ENCODE measurements at regions of chr1 and their contacts with region 1.

Region 1: GRCh38 chr1:67853704-67854103 is 20.4 kb upstream of the GNG12 start:
- DNase-seq: no peak
- H3K4me3 ChIP-seq: no peak overlapping the region
- H3K27ac ChIP-seq: no peak overlapping the region
- H3K27me3 ChIP-seq: no peaks in the 10 kb centered on the region
- CTCF ChIP-seq: peak; percentile 99

Region 2: DNA sequence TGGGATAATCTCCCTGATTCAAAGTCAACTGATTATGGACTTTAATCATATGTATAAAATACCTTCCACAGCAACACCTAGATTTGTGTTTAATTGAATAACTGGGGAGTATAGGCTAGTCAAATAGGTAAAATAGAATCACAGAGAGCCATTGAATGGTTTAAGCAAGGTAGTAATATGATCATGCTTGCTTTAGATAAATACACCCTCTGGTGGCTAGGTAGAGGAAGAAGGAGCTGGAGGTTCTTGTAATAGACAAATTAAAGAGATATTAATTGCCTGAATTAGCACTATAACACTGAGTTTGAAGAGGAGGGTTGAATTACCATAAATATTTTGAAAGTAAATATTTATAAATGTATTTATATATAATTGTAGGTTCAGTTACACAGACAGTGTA is 156.4 kb after region 1 on chr1:
- CTCF ChIA-PET with region 1: interaction called, 94 read pairs
- POLR2A ChIA-PET with region 1: no interaction called
- DNase-seq: no peak
- H3K4me3 ChIP-seq: no peak overlapping the region
- H3K27ac ChIP-seq: no peak overlapping the region
- H3K27me3 ChIP-seq: no peaks in the 10 kb centered on the region
- CTCF ChIP-seq: peak; percentile 65

Region 3: GRCh38 chr1:68051475-68051874 is 197.8 kb after region 1 on chr1:
- CTCF ChIA-PET with region 1: interaction called, 24 read pairs
- POLR2A ChIA-PET with region 1: no interaction called
- DNase-seq: peak; percentile 37
- H3K4me3 ChIP-seq: peak overlapping the region; percentile 62
- H3K27ac ChIP-seq: peak overlapping the region; percentile 31
- H3K27me3 ChIP-seq: no peaks in the 10 kb centered on the region
- CTCF ChIP-seq: peak; percentile 68

Region 4: GRCh38 chr1:68103884-68104554 is 250.3 kb after region 1 on chr1:
- CTCF ChIA-PET with region 1: interaction called, 208 read pairs
- POLR2A ChIA-PET with region 1: no interaction called
- DNase-seq: peak; percentile 71
- H3K4me3 ChIP-seq: no peak overlapping the region
- H3K27ac ChIP-seq: peak overlapping the region; percentile 91
- H3K27me3 ChIP-seq: no peaks in the 10 kb centered on the region
- CTCF ChIP-seq: no peak

Region 5: DNA sequence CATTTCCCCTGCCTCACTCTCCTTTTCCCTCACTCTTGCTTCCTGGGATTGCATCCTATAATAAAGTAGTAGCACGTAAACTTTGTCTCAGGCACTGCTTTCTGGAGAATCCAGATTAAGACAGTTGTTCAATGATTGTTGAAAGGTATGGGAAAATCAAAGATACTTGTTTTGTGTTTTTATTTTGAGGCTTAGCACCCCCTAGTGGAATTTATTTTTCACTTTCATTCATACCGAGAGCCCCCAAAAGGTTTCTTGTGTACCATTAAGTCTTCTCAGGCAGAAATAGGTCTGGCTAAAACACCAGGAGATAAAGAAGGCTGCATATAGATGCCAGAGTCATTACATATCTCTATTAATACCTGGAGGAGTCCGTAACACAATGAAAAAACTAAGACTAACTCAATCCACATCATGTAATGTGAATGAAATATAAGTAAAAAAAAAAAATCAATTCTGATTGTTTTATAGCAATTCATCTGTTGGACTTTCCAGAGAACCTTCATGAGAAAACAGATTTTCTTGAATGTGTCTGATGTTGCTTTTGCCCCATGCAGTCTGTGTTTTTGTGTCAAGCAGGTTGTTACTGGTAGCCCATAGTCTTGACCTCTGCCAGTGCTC is 492.6 kb after region 1 on chr1:
- CTCF ChIA-PET with region 1: interaction called, 10 read pairs
- POLR2A ChIA-PET with region 1: no interaction called
- DNase-seq: no peak
- H3K4me3 ChIP-seq: no peak overlapping the region
- H3K27ac ChIP-seq: no peak overlapping the region
- H3K27me3 ChIP-seq: no peaks in the 10 kb centered on the region
- CTCF ChIP-seq: peak; percentile 57